ENCODE measurements at regions of chr20 and their contacts with region 1.

Region 1: GRCh38 chr20:25195014-25195961 is at the start of gene ENTPD6:
- DNase-seq: peak; percentile 89
- H3K4me3 Mint-ChIP-seq: peak within 1 kb of the TSS; percentile 91
- H3K27ac Mint-ChIP-seq: peak within 1 kb of the TSS; percentile 81
- H3K4me1 Mint-ChIP-seq: peaks cover 20% of the 10 kb centered on the region
- H3K27me3 Mint-ChIP-seq: no peaks in the 10 kb centered on the region
- total RNA-seq, gene ENTPD6: 42.5 and 43.5 TPM in 2 replicates

Region 2: DNA sequence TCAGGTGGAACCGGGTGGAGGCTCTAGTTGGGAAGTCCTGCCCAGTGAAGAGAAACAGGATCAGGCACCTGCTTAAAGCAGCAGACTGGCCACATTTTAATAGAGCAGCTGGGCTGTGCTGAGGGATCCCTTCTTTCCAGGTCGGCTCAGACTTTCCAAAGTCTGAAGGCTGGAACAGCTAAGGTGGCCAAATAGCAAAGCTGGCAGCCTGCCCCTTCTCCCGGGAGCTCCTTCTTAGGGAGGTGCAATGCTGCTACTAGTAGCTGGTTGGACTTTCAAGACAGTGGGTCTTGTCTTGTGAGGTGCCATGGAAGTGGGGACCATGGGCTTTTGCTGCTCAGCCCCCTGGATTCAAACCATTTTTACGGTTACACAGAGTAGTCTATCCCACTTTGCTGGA is 1285.1 kb before region 1 on chr20:
- intact Hi-C with region 1: no loop called
- DNase-seq: no peak
- H3K4me3 Mint-ChIP-seq: no peak overlapping the region
- H3K27ac Mint-ChIP-seq: no peak overlapping the region
- H3K4me1 Mint-ChIP-seq: no peaks in the 10 kb centered on the region
- H3K27me3 Mint-ChIP-seq: peaks cover 11% of the 10 kb centered on the region

Region 3: DNA sequence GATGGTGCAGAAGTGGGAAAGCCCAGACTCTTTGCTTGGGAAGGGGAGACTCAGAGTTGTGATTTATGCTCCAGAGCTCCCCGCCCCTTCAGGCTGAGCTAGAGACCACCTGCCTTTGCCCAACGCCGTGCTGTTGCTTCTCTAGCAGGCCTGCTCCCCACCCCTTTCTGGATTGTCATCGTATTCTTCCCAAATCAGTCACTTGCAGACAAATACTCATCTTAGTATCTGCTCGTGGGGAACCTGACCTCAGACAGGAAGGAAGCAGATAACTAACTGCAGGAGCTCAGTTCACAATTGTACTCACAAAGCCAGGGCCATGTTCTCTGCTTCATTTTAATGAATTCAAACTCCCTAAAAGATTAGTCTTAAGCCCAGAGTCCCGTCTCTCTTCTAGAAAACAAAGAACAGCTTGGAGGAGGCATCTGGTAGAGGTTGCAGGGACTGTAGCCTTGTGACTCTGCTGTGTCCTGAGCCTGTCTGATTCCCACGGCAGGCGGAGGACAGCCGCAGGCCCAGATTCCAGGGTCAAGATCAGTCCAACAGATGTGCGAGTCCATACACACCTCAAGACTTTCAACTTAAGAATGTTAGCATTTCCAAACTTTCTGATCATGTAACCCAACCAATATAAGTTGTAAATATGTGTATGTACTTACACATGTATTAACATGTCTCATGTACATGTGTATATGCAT is 1149.5 kb before region 1 on chr20:
- intact Hi-C with region 1: loop called (anchors 5 kb)
- DNase-seq: peak; percentile 24
- H3K4me3 Mint-ChIP-seq: peak overlapping the region; percentile 3
- H3K27ac Mint-ChIP-seq: peak overlapping the region; percentile 79
- H3K4me1 Mint-ChIP-seq: peaks cover 49% of the 10 kb centered on the region
- H3K27me3 Mint-ChIP-seq: no peaks in the 10 kb centered on the region

Region 4: DNA sequence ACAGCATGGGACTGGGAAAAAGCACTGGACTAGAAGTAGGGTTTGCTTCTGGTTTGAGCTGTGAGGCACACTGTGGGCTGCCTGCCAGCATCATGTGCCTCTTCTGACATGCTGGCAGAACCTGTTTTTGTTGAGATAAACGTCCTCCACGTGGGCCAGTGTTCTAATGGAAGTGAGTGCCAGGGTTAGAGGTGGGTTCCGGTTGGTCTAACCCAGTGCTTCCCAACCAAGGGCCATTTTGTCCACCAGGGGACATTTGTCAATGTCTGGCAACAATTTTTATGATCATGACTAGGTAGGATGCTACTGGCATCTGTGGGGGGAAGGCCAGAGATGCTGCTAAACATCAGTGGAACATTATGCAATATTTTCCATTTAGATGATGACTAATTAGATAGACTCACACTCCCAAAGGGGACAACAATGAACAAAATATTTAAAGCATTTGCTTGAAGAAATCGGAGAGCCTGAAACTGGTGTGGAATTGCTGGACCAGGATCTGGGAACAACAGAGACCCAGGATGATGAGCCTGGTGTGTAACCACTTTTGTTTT is 194.9 kb before region 1 on chr20:
- intact Hi-C with region 1: no loop called
- DNase-seq: no peak
- H3K4me3 Mint-ChIP-seq: no peak overlapping the region
- H3K27ac Mint-ChIP-seq: no peak overlapping the region
- H3K4me1 Mint-ChIP-seq: no peaks in the 10 kb centered on the region
- H3K27me3 Mint-ChIP-seq: peaks cover 22% of the 10 kb centered on the region

Region 5: DNA sequence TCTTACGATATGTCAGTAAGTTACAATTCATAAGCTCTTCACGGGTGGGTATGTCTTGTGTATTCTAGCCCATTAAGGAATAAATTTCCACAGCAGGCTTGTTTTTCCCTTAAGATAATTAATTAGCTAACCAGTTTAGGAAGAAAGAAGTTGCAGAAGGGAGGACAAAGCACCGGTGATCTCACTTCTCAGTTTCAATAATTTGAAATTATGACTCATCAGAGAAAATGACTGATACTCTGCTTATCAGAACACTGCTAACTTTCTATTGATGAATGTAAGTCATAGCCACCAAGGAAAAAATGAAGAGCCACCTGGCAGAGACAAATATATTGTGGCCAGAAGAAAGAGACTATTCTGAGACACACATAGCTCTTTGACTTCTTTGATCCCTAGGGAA is 34.8 kb before region 1 on chr20:
- intact Hi-C with region 1: loop called (anchors 1 kb)
- DNase-seq: no peak
- H3K4me3 Mint-ChIP-seq: no peak overlapping the region
- H3K27ac Mint-ChIP-seq: no peak overlapping the region
- H3K4me1 Mint-ChIP-seq: peaks cover 8% of the 10 kb centered on the region
- H3K27me3 Mint-ChIP-seq: peaks cover 7% of the 10 kb centered on the region

Region 6: GRCh38 chr20:25247956-25248785 is 52.9 kb after region 1 on chr20 and contains the start of gene PYGB:
- intact Hi-C with region 1: loop called (anchors 1 kb)
- DNase-seq: peak; percentile 69
- H3K4me3 Mint-ChIP-seq: peak within 1 kb of the TSS; percentile 92
- H3K27ac Mint-ChIP-seq: peak within 1 kb of the TSS; percentile 87
- H3K4me1 Mint-ChIP-seq: peaks cover 43% of the 10 kb centered on the region
- H3K27me3 Mint-ChIP-seq: no peaks in the 10 kb centered on the region
- total RNA-seq, gene PYGB: 36.8 and 38.5 TPM in 2 replicates

Region 7: GRCh38 chr20:25310268-25310920 is 115.1 kb after region 1 on chr20:
- intact Hi-C with region 1: loop called (anchors 5 kb)
- DNase-seq: peak; percentile 61
- H3K4me3 Mint-ChIP-seq: peak overlapping the region; percentile 81
- H3K27ac Mint-ChIP-seq: peak overlapping the region; percentile 98
- H3K4me1 Mint-ChIP-seq: peaks cover 46% of the 10 kb centered on the region
- H3K27me3 Mint-ChIP-seq: no peaks in the 10 kb centered on the region